OCI-LY7 (cell line): ENCODE measurements at regions of chr19 and their contacts with region 1.

Region 1: DNA sequence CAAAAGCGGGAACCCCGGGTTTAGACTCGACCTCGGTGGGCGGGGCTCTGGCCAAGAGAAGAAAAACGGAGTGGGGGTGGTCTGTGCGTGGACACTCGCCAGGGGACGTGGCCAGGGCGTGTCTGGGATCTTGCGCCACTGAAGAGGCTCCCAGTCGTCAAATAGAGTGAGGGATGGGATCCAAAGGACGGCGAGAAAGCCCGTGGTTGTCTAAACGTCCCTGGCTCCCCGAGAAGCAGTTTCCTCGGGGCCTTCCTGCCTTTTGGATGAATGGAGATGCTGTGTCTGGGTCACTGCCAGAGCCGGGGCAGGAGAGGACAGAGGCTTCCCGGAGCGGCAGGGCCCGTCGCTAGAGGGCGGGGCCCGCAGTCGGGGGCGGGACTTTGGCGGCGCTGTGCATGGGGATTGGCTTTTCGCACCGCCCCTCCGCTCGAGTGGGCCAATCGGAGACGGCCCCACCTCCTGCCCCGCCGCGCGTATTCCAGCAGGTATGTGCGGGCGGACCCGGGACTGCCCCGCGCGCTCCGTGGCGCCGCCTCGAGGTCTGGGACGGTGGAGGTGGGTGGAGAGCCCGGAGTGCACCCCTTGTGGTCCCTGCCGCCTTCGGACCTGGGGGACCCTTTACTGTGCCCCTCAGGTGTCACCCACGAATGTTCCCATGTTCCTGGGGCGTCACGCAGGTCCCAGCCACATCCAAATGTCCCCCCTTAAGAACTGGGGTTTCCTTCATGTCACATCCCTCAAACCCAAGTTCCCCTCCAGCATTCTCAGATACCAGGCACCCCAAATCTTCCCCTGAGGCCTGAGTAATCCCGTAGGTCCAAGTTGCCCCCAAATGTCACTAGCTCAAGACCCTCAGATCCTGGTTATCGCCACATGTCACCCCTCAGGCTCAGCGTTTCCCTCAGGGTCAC is 38.3 kb downstream of the ZSWIM4 start:
- DNase-seq: peak; percentile 93
- H3K4me3 ChIP-seq: peak overlapping the region; percentile 69
- H3K27ac ChIP-seq: no peak overlapping the region
- H3K4me1 ChIP-seq: peaks cover 44% of the 10 kb centered on the region
- CTCF ChIP-seq: peak; percentile 78

Region 2: DNA sequence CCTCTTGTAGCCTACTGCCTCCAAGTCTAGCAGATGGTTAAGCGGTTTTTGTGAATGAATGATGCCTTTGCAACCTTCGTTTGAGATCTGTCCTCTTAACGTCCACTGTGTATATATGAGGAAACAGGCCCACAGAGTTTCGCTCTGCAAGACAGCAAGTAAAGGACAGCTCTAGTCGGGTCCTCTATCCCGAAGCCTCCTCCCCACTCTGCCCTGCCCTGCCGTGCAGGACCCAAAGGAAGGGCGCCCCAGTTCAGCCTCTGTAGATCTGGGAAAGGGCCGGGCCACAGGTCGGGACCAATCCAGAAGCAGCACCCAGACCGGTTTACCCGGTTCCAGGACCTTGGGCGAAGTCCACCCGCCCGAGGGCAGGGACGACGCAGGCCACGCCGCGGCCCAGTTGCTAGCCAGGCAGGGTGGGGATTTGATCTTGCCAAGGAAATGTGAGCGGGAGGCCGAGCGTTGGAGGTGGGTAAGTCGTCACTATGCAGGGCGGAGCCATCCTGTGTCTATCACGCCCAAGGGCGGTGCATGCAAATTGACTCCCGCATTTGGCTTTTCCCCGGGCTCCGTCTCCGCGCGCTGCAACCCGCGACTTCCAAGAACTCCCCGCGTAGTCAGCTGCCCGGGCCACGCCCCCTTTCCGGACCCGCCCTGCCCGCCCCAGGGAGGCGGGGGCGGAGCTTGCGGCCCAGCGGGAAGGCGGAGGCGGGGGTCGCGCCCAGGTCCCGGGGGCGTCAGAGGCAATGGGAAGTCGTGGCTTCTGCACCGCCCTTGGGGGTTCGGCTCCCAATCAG is 670.9 kb before region 1 on chr19:
- CTCF ChIA-PET with region 1: no interaction called
- POLR2A ChIA-PET with region 1: no interaction called
- intact Hi-C with region 1: loop called (anchors 10 kb)
- DNase-seq: peak; percentile 94
- H3K4me3 ChIP-seq: peak overlapping the region; percentile 69
- H3K27ac ChIP-seq: peak overlapping the region; percentile 95
- H3K4me1 ChIP-seq: peaks cover 96% of the 10 kb centered on the region
- CTCF ChIP-seq: no peak

Region 3: GRCh38 chr19:13764101-13764807 is 69.3 kb before region 1 on chr19 and contains the start of gene MRI1:
- CTCF ChIA-PET with region 1: no interaction called
- POLR2A ChIA-PET with region 1: no interaction called
- intact Hi-C with region 1: no loop called
- DNase-seq: peak; percentile 61
- H3K4me3 ChIP-seq: peak within 1 kb of the TSS; percentile 68
- H3K27ac ChIP-seq: no peak within 1 kb of the TSS
- H3K4me1 ChIP-seq: peaks cover 11% of the 10 kb centered on the region
- CTCF ChIP-seq: no peak
- total RNA-seq, gene MRI1: 27.3 and 33.4 TPM in 2 replicates

Region 4: DNA sequence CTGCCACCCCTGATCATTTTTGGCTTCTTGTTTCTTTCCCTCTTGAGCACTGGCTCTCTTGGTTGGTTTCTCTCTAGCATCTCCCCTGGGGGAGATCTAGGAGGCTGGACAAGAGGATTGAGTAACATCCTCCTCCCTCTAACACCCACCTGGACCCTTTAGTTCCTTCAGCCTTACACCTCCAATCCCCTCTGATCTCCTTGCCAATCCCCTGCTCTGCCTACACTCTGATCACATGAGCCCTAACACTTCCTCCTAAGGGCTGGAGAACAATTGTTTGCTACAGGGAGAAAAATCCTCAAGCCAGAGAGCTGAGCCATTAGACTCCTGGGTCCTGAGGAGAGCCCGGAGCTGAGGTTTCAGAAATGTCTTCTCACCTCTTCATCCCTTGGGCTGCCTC is 438.3 kb after region 1 on chr19:
- CTCF ChIA-PET with region 1: no interaction called
- POLR2A ChIA-PET with region 1: no interaction called
- intact Hi-C with region 1: no loop called
- DNase-seq: no peak
- H3K4me3 ChIP-seq: no peak overlapping the region
- H3K27ac ChIP-seq: no peak overlapping the region
- H3K4me1 ChIP-seq: no peaks in the 10 kb centered on the region
- CTCF ChIP-seq: no peak